Activated naive CD4-positive, alpha-beta T cell treated with anti-CD3 and anti-CD28 coated beads for 36 hours (primary cell): ENCODE measurements at regions of chr12 and their contacts with region 1.

Region 1: DNA sequence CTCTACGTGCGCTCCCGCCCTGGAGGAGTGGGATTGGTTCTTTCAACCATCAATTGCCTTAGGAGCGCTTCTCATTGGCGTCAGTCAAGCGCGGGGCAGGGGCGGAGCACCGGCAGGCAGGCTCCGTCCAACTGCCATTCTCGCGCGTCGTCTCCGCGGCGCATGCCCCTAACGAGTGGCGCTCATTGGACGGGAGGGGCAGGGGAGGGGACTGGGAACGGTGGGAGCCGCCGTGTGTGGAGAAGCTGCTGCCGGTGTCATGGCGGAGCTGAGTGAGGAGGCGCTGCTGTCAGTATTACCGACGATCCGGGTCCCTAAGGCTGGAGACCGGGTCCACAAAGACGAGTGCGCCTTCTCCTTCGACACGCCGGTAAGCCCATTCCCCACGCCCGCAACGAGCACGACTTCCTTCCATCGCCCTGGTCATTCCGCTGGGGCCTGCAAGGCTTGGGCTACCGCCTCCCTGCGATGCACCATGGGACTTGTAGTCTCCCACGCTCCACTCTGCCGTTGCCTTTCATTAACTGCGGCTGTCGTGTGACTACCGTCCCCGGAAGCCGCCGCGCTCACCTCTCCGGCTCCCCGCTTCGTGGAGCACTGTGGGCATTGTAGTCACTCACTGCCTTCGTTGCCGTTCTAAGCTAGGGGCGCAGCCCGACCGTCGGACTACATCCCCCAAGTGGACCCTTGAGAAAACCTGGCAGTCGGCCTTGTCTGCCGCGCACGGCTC is at the start of gene USP5:
- DNase-seq: peak; percentile 99
- H3K4me3 Mint-ChIP-seq: peak within 1 kb of the TSS; percentile 86
- H3K27ac Mint-ChIP-seq: peak within 1 kb of the TSS; percentile 93
- H3K4me1 Mint-ChIP-seq: peaks cover 35% of the 10 kb centered on the region
- H3K27me3 Mint-ChIP-seq: no peaks in the 10 kb centered on the region
- total RNA-seq, gene USP5: 115 to 123 TPM

Region 2: DNA sequence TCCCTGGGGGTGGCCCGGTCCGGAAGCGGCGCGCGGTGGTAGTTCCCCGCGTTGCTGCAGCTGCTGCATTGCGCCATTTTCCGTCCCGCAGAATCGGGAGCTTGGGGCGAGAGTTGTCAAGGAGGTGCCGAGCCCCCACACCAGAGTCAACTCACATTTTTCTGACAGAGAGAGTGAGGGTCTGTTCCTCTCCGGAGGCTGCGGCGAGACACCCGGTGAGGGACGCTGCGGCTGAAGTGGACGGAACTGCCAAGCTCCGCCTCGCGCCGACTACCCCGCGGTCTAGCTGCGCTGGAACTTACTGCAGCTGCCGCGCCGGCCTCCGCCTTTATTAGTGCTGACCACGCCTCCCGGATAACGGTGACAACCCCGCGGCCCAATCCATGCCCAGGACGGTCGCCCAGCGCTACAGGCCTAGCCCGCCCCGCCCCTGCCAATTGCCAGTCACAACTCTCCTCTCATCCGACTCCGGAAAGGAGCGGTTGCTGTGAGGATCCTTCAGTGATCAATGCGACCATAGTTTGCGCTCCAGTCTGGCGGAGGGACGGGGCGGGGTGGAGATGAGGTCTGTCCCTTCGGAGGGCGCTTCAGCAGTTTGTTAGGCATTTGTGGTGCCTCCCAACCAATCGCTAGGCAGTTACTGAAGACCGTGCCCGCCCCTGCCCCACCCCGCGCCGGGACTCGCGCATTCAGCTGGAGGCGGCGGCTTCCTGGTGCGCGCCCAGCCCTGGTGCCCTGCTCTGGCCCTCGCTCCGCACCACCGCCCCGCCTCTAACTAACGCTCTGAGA is 381.5 kb before region 1 on chr12 and contains the start of gene VAMP1:
- CTCF ChIA-PET with region 1: no interaction called
- intact Hi-C with region 1: loop called (anchors 5 kb)
- DNase-seq: peak; percentile 99
- H3K4me3 Mint-ChIP-seq: peak within 1 kb of the TSS; percentile 91
- H3K27ac Mint-ChIP-seq: peak within 1 kb of the TSS; percentile 90
- H3K4me1 Mint-ChIP-seq: peaks cover 53% of the 10 kb centered on the region
- H3K27me3 Mint-ChIP-seq: no peaks in the 10 kb centered on the region
- total RNA-seq, gene VAMP1: 31.9 to 33.5 TPM

Region 3: DNA sequence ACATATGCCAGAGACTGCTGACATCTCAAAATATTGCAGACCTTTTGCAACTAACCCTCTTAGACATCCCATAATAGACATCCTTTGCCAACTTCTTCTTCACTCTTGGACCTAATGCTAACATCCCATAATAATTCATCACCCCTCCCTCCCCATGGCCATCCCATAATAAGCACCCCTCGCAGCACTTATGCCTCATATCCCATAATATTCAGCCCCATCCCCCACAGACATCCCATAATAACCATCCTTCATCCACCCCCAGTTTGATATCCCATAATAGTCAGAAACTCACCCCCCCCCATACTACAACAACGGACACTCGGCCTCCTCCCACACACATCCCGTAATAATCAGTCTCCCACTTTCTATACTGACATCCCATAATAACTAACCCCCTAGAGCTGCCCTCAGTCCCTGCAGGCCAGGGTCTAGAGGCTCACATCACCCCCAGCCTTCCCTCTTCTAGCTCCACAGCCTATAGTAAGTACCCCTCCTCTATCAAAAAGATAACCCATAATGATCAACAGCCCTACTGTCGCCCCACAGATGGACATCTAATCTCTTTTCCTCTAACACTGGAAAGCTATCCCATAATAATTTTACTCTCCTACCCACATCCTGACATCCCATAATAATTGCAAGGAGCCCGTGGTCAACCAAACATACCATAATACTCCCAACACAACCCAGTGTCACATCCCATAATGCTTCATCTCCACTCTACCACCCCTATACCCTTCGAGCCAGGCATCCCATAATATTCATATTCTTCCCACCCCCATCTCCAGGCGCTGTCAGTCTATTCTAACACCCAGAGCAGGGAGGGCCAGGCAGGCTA is 244.1 kb before region 1 on chr12:
- CTCF ChIA-PET with region 1: interaction called, 3 read pairs
- intact Hi-C with region 1: loop called (anchors 1 kb)
- DNase-seq: peak; percentile 79
- H3K4me3 Mint-ChIP-seq: no peak overlapping the region
- H3K27ac Mint-ChIP-seq: no peak overlapping the region
- H3K4me1 Mint-ChIP-seq: peaks cover 55% of the 10 kb centered on the region
- H3K27me3 Mint-ChIP-seq: no peaks in the 10 kb centered on the region

Region 4: DNA sequence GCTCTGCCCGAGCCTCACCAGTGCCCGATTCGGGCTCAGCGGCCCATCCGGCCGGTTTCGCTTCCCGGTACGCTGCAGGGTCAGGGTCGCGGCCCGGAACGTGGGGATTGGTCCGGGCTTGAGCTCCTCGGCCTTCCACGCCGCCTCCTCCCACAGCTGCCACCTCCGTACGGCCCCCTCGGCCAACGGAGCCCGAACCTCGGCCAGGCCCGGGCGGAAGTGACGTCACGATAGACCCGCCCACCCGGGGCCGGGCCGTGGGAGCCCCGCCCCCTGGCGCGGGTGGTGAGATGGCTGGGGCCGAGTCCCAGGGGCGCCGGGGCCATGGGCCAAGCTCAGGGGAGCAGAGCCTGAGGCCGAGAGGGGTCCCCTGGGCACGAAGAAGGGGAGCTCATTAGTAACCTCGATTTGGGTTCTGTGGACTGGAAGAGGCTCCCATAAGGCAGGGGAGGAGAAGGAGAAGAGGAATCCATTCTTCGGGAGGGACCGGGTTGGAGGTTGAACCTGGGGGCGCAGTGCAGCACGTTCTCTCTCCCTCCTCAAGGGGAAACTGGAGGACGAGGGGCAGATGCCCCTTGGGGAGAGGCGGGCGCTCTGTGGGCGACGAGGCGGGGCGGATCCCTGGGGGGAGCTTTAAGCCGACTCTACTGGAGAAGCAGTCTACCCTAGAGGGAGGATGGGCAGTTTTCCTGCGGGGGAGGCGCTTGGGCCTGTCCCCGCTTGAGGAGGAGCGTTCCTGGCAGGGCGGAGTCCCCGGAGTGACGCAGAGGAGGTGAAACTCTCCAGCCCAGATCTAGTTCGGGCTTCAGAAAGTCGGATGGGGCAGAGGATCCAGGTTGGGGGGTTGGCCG is 98.9 kb before region 1 on chr12 and contains the start of gene MLF2:
- CTCF ChIA-PET with region 1: interaction called, 6 read pairs
- intact Hi-C with region 1: loop called (anchors 1 kb)
- DNase-seq: peak; percentile 99
- H3K4me3 Mint-ChIP-seq: peak within 1 kb of the TSS; percentile 96
- H3K27ac Mint-ChIP-seq: peak within 1 kb of the TSS; percentile 97
- H3K4me1 Mint-ChIP-seq: peaks cover 25% of the 10 kb centered on the region
- H3K27me3 Mint-ChIP-seq: no peaks in the 10 kb centered on the region
- total RNA-seq, gene MLF2: 140 to 143 TPM

Region 5: DNA sequence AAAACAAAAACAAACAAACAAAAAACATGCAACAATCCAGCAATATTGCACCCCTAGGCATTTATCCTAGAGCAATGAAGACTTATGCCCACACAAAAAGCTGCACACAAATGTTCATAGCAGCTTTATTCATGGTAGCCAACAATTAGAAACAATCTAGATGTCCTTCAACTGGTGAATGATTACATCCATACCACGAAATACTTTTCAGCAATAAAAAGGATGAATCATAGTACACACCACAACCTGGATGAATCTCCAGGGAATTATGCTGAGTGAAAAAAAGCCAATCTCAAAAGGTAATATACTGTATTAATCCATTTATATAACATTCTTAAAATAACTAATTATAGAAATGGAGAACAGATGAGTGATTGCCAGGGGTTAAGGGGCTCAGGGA is 44.9 kb before region 1 on chr12:
- CTCF ChIA-PET with region 1: no interaction called
- intact Hi-C with region 1: no loop called
- DNase-seq: no peak
- H3K4me3 Mint-ChIP-seq: no peak overlapping the region
- H3K27ac Mint-ChIP-seq: no peak overlapping the region
- H3K4me1 Mint-ChIP-seq: peaks cover 19% of the 10 kb centered on the region
- H3K27me3 Mint-ChIP-seq: no peaks in the 10 kb centered on the region

Region 6: GRCh38 chr12:6867413-6868210 is 15.5 kb after region 1 on chr12 and contains the start of gene TPI1:
- CTCF ChIA-PET with region 1: interaction called, 24 read pairs
- intact Hi-C with region 1: no loop called
- DNase-seq: peak; percentile 79
- H3K4me3 Mint-ChIP-seq: peak within 1 kb of the TSS; percentile 98
- H3K27ac Mint-ChIP-seq: peak within 1 kb of the TSS; percentile 94
- H3K4me1 Mint-ChIP-seq: peaks cover 52% of the 10 kb centered on the region
- H3K27me3 Mint-ChIP-seq: no peaks in the 10 kb centered on the region
- total RNA-seq, gene TPI1: 1,222 to 1,282 TPM

Region 7: DNA sequence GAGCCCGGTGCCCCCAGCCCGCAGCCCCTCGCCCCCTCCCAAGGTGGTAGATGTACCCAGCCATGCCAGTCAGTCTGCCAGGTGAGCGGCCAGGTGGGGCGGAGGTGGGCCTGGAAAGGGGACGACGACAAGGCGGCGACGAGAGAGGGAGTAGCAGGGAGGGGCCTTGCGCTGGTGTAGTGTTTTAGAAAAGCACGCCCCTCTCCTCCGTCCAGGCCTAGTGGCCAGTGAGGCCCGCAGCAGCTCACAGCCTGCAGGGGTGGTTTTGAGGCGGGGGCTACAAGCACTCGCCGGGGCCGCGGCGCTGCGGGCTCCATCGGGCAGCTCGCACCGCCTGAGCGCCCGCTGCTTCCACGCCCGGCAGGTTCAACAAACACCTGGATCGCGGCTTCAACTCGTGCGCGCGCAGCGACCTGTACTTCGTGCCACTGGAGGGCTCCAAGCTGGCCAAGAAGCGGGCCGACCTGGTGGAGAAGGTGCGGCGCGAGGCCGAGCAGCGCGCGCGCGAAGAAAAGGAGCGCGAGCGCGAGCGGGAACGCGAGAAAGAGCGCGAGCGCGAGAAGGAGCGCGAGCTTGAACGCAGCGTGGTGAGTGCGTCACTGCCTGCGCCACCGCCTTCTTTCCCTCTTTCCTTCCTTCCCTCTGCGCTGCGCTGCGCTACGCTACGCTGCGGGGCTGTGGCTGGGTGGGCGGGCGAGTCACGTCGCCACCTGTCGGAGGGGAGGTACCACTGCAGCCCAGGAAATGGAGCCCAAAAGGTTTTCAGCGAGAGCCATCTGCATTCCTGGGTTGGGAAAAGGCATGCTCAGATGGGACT is 85.6 kb after region 1 on chr12:
- CTCF ChIA-PET with region 1: interaction called, 7 read pairs
- intact Hi-C with region 1: loop called (anchors 1 kb)
- DNase-seq: peak; percentile 96
- H3K4me3 Mint-ChIP-seq: peak overlapping the region; percentile 92
- H3K27ac Mint-ChIP-seq: peak overlapping the region; percentile 96
- H3K4me1 Mint-ChIP-seq: peaks cover 47% of the 10 kb centered on the region
- H3K27me3 Mint-ChIP-seq: no peaks in the 10 kb centered on the region

Region 8: DNA sequence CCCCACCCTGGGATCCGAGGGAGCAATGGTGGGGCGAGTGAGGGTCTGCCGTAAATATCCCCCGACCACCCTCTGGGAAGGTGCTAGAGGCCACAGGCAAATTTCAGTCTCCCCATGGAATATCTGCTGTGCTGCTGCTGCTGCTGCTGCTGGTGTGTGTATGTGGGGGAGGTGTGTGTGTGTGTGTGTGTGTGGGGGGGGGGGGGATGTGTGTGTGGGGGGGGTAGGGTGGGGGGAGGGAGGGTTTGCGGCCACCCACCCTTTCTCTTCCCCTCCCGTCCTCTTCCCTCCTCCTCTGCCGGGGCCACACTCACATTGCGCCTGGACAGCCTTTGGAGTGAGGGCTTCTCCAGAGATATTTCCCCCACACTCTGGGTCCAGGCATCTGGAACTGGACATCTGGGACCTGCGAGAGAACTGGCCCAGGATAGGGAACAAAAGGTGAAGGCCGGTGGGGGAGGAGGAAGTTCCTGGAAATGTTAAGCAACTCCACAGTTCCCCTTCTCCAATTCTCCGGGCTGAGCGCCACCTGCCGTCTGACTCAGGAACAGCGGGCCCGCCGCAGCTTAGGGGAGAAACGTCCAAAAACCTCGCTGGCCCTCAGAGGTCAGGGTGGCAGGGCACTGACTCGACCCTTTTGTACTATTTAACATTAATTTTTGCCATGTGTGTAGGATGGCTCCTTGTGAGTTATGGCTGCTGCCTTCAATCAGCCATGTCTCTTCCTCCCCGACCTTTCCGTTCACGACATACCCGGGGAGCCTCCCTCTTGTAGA is 256.9 kb after region 1 on chr12 and contains the start of gene C1RL:
- CTCF ChIA-PET with region 1: no interaction called
- intact Hi-C with region 1: loop called (anchors 5 kb)
- DNase-seq: peak; percentile 91
- H3K4me3 Mint-ChIP-seq: peak within 1 kb of the TSS; percentile 95
- H3K27ac Mint-ChIP-seq: peak within 1 kb of the TSS; percentile 97
- H3K4me1 Mint-ChIP-seq: peaks cover 29% of the 10 kb centered on the region
- H3K27me3 Mint-ChIP-seq: no peaks in the 10 kb centered on the region
- total RNA-seq, gene C1RL: 10.3 to 11.5 TPM